ENCODE measurements at regions of chr2 and their contacts with region 1.

Region 1: DNA sequence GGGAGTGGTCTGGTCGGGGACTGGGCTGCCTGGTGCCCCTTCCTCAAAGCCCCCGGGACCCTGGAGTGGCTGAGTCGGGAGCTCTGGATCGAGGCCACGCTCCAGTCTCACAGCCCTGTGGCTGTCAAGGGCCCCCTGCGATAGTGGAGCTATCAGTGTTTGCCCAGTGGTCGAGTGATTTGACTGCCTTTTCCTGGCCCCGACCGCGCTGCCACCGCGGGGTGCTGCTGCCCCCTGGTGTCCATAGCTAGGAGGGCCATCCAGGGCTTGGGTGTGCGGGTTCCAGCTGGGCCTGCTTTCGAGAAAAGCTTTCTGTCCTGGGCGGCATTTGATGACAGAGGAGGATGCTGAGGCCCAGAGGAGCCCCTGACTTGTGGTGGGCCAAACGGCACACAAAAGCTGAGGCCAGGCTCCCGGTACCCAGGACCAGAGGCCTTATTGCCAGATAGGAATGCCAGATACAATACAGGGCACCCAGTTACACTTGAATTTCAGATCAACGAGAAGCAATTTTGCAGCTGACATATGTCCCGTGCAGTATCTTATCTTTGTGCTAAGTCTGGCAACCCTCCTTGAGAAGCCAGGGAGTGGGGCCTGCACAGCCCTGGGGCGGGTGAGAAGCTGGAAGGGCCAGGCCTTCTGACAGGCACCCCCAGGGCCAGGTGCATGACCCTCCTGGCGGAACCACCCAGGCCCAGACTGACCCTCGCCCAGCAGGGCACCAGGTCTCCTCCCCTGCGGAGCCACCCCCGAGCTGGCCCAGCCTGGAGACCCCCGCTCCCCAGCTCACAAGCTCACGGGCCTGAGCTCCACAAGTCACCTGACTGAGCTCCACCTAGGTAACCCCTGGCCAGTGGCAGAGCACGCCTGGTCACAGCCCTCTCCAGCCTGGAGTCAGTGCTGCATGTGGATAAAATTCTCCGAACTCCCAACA is 13.0 kb downstream of the ODC1 start:
- DNase-seq: peak; percentile 82
- H3K27ac ChIP-seq: peak overlapping the region; percentile 21
- CTCF ChIP-seq: peak; percentile 91

Region 2: DNA sequence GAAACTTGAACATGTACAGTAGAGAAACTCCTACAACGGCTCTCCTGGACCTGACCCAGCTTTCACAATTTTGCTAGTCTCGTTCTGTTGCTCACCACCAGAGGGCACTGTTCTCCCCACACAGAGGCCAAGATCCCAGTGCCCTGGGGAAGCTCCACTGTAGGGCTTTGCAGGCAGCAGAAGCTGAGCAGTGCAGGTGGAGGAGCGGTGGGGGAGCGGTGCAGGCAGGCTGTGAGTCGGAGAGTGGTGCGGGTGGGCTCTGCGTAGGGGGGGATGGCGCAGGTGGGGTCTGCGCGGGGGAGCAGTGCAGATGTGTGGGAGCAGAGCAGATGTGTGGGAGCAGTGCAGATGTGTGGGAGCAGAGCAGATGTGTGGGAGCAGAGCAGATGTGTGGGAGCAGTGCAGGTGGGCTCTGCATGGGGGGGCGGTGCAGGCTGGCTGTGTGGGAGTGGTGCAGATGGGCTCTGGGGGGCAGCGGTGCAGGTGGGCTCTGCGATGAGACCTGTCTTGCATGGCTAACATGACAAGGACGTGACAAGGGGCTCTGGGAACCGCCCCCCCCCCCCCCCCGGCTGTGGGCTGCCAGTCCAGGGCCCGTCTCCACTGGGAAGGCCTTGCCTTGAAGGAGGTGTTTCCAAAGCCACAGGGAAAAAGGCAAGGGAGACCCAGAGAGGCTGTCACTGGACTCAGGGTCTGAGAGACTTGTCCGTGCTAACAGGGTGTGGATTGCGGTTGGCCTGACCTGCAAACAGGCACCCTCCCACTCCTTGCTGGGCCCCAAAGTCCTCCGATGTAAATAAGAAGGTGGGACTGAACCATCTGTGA is 362.3 kb before region 1 on chr2:
- CTCF ChIA-PET with region 1: interaction called, 49 read pairs
- POLR2A ChIA-PET with region 1: no interaction called
- DNase-seq: peak; percentile 87
- H3K27ac ChIP-seq: no peak overlapping the region
- CTCF ChIP-seq: peak; percentile 86

Region 3: GRCh38 chr2:10144771-10145518 is 290.2 kb before region 1 on chr2:
- CTCF ChIA-PET with region 1: interaction called, 12 read pairs
- POLR2A ChIA-PET with region 1: no interaction called
- DNase-seq: no peak
- H3K27ac ChIP-seq: peak overlapping the region; percentile 51
- CTCF ChIP-seq: no peak

Region 4: GRCh38 chr2:10424051-10424450 is 11.1 kb before region 1 on chr2:
- CTCF ChIA-PET with region 1: interaction called, 13 read pairs
- POLR2A ChIA-PET with region 1: no interaction called
- DNase-seq: no peak
- H3K27ac ChIP-seq: no peak overlapping the region
- CTCF ChIP-seq: no peak

Measured in RWPE1 (cell line).